ENCODE measurements at regions of chr17 and their contacts with region 1.

Region 1: GRCh38 chr17:7067198-7067597 is 12.9 kb downstream of the CLEC10A start:
- DNase-seq: no peak
- H3K4me3 ChIP-seq: no peak overlapping the region
- H3K27ac ChIP-seq: no peak overlapping the region
- H3K4me1 ChIP-seq: peaks cover 4% of the 10 kb centered on the region
- H3K27me3 ChIP-seq: no peaks in the 10 kb centered on the region
- CTCF ChIP-seq: no peak

Region 2: GRCh38 chr17:6872137-6872808 is 194.9 kb before region 1 on chr17:
- CTCF ChIA-PET with region 1: no interaction called
- dilution Hi-C with region 1: no loop called
- in situ Hi-C with region 1: no loop called
- intact Hi-C with region 1: no loop called
- DNase-seq: peak; percentile 99
- H3K4me3 ChIP-seq: no peak overlapping the region
- H3K27ac ChIP-seq: peak overlapping the region; percentile 72
- H3K4me1 ChIP-seq: peaks cover 55% of the 10 kb centered on the region
- H3K27me3 ChIP-seq: no peaks in the 10 kb centered on the region
- CTCF ChIP-seq: no peak

Region 3: GRCh38 chr17:7114875-7115614 is 47.8 kb after region 1 on chr17:
- CTCF ChIA-PET with region 1: no interaction called
- dilution Hi-C with region 1: loop called (anchors 5 kb)
- in situ Hi-C with region 1: no loop called
- intact Hi-C with region 1: no loop called
- DNase-seq: no peak
- H3K4me3 ChIP-seq: no peak overlapping the region
- H3K27ac ChIP-seq: no peak overlapping the region
- H3K4me1 ChIP-seq: no peaks in the 10 kb centered on the region
- H3K27me3 ChIP-seq: peaks cover 3% of the 10 kb centered on the region
- CTCF ChIP-seq: no peak